Activated T-helper 1 cell treated with anti-CD3 and anti-CD28 coated beads, Interleukin-12 subunit alpha, Interleukin-12 subunit beta, Interleukin-2, Interleukin-4 antibody, amounts not matched to agents 30 ng/mL and 10 ng/mL and 1 ng/mL, durations not matched to agents 14 hours and 24 hours and 36 hours (primary cell): ENCODE measurements at regions of chr14 and their contacts with region 1.

Region 1: DNA sequence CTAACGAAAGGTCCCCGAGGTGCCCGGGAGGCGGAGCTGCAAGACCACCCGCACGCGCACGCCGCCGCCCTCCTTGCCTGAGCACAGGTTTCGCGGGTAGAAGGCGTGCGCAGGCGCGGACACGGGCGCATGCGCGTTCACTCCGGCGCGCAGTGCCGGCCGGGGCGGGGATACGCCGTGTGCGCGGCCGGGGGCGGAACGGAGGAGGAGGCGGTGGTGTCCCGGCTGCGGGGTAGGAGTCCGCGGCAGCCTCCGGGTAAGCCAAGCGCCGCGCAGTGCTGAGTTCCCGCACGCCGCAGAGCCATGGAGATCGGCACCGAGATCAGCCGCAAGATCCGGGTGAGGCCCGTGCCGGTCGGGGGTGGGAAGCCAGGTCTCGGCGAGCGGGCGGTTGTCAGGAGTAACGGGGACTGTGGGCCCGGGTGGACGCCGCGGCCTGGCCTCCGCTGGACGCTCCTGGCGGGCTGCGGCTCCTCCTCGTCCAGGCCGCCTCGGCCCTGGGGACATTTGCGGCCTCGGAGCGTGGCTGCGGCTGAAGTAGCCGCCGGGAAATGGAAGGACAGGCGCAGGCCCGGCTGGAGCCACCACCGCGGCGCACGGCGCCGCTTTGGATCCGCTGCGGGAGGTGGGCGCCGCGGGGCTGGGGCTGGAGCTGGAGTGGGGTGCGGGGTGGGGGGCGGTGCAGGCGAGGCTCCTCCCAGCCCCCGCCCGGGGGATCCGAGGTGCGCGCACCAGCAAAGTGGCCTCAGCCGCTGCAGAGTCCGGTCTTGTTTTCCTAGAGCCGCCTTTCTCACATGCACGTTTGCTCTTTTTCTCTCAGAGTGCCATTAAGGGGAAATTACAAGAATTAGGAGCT is at the start of gene ZC3H14:
- DNase-seq: peak; percentile 87
- H3K4me3 Mint-ChIP-seq: peak within 1 kb of the TSS; percentile 91
- H3K27ac Mint-ChIP-seq: peak within 1 kb of the TSS; percentile 91
- H3K4me1 Mint-ChIP-seq: peaks cover 29% of the 10 kb centered on the region
- H3K27me3 Mint-ChIP-seq: peaks cover 22% of the 10 kb centered on the region
- total RNA-seq, gene ZC3H14: 61.0 and 65.5 TPM in 2 replicates

Region 2: GRCh38 chr14:87992718-87993628 is 570.1 kb before region 1 on chr14 and contains the start of gene GALC:
- intact Hi-C with region 1: loop called (anchors 2 kb)
- DNase-seq: peak; percentile 93
- H3K4me3 Mint-ChIP-seq: peak within 1 kb of the TSS; percentile 92
- H3K27ac Mint-ChIP-seq: peak within 1 kb of the TSS; percentile 98
- H3K4me1 Mint-ChIP-seq: peaks cover 55% of the 10 kb centered on the region
- H3K27me3 Mint-ChIP-seq: no peaks in the 10 kb centered on the region
- total RNA-seq, gene GALC: 8.6 and 8.7 TPM in 2 replicates

Region 3: DNA sequence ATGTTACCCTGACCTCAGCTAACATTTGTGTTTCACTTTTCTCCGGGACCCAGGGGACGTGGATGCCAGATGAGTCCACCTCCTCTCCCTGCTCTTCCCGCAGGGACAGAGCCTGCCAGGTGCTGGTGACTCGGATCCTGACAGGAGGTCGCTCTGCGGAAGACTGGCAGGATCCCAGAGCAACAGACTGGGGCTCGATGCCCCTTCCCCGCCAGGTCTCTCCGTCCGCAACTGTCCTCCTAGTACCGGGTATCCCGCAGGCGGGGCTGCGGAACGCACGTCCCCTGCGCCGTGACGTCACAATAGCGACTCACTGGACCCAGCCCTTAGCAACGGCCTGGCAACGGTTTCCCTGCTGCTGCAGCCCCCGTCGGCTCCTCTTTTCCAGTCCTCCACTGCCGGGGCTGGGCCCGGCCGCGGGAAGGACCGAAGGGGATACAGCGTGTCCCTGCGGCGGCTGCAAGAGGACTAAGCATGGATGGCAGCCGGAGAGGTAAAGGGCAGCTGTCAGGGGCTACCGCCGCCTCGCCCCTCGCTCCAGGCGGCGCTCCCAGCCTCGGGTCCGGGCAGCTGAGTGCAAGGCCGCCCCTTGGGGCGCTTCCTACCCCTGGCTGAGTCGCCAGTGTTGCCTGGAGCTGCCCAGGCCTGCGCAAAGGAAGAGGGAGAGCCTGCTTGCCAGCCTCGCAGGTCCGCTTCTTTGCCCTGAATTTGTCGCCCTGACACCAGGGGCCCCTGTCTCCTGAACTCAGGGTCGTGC is 177.5 kb before region 1 on chr14 and contains the start of gene SPATA7:
- intact Hi-C with region 1: loop called (anchors 2 kb)
- DNase-seq: peak; percentile 80
- H3K4me3 Mint-ChIP-seq: peak within 1 kb of the TSS; percentile 96
- H3K27ac Mint-ChIP-seq: peak within 1 kb of the TSS; percentile 61
- H3K4me1 Mint-ChIP-seq: peaks cover 15% of the 10 kb centered on the region
- H3K27me3 Mint-ChIP-seq: peaks cover 7% of the 10 kb centered on the region
- total RNA-seq, gene SPATA7: 2.4 and 2.5 TPM in 2 replicates

Region 4: DNA sequence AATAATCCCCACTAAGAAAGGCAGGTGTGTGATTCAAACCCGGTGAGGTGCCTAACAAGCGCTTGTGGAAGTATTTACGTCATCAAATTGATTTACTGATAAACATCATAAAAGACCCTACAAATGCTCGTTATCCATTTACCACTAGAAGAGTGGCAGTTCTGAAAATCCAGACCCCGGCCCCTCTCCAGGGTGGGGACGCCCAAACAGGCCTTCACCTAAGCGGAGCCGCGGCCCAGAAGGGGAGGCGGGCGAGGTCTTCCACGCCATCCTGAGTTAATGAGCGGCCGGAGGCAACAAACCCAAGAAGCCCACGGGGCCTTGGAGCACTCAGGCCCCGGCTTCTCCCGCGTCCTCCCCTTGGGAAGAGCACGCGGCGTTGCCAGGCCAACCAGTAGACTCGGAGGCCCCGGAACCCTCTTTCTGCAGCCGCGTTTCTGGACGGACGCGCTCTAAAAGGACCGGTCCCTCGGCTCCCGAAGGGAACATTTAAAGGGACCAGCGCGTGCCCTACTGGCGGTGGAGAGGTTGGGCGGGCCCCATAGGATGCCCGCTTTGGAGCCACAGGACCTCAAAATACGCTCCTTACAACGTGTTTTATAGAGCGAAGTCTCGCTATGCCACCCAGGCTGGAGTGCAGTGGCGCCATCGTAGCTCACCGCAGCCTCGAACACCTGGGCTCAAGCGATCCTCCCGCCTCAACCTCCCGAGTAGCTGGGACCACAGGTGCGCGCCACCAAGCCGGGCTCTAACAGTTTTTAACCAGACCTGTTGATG is 11.8 kb before region 1 on chr14:
- intact Hi-C with region 1: loop called (anchors 1 kb)
- DNase-seq: peak; percentile 23
- H3K4me3 Mint-ChIP-seq: peak overlapping the region; percentile 77
- H3K27ac Mint-ChIP-seq: no peak overlapping the region
- H3K4me1 Mint-ChIP-seq: peaks cover 11% of the 10 kb centered on the region
- H3K27me3 Mint-ChIP-seq: peaks cover 38% of the 10 kb centered on the region

Region 5: GRCh38 chr14:88792572-88793258 is 229.7 kb after region 1 on chr14 and contains the start of gene EML5:
- intact Hi-C with region 1: loop called (anchors 2 kb)
- DNase-seq: peak; percentile 75
- H3K4me3 Mint-ChIP-seq: peak within 1 kb of the TSS; percentile 82
- H3K27ac Mint-ChIP-seq: peak within 1 kb of the TSS; percentile 71
- H3K4me1 Mint-ChIP-seq: peaks cover 13% of the 10 kb centered on the region
- H3K27me3 Mint-ChIP-seq: peaks cover 31% of the 10 kb centered on the region
- total RNA-seq, gene EML5: 1.5 and 1.7 TPM in 2 replicates